H1 (cell line): ENCODE measurements at regions of chr6 and their contacts with region 1.

Region 1: GRCh38 chr6:37169496-37170272 is at the start of gene PIM1:
- DNase-seq: peak; percentile 92 to 93
- H3K4me3 ChIP-seq: peak within 1 kb of the TSS; percentile 92 to 99 (median 94)
- H3K27ac ChIP-seq: peak within 1 kb of the TSS; percentile 97
- H3K4me1 ChIP-seq: peaks cover 6 to 14% (median 10%) of the 10 kb centered on the region in 4 experiments; a peak in 5 of 7 replicates
- H3K27me3 ChIP-seq: no peaks in the 10 kb centered on the region
- CTCF ChIP-seq: no peak
- EP300 ChIP-seq: peak in 1 of 2 experiments; percentile 54; a peak in 1 of 3 replicates
- POLR2A ChIP-seq: peak in 1 of 2 experiments; percentile 65
- RAD21 ChIP-seq: no peak
- total RNA-seq, gene PIM1: 94.1 and 94.9 TPM in 2 replicates

Region 2: GRCh38 chr6:37059344-37060206 is 110.1 kb before region 1 on chr6:
- CTCF ChIA-PET with region 1: interaction called, 40 read pairs
- POLR2A ChIA-PET with region 1: interaction called, 82 read pairs
- DNase-seq: peak in 1 of 2 experiments; percentile 82
- H3K4me3 ChIP-seq: peak overlapping the region in 3 of 4 experiments; percentile 20 to 46 (median 24); a peak in 4 of 8 replicates
- H3K27ac ChIP-seq: peak overlapping the region; percentile 94
- H3K4me1 ChIP-seq: peaks cover 4 to 31% (median 22%) of the 10 kb centered on the region in 4 experiments
- H3K27me3 ChIP-seq: no peaks in the 10 kb centered on the region
- CTCF ChIP-seq: peak in 2 of 3 experiments; percentile 73 to 82; a peak in 3 of 4 replicates
- EP300 ChIP-seq: peak in 1 of 2 experiments; percentile 19; a peak in 1 of 3 replicates
- POLR2A ChIP-seq: peak in 1 of 2 experiments; percentile 78; a peak in 2 of 3 replicates
- RAD21 ChIP-seq: peak; percentile 82 to 83

Region 3: DNA sequence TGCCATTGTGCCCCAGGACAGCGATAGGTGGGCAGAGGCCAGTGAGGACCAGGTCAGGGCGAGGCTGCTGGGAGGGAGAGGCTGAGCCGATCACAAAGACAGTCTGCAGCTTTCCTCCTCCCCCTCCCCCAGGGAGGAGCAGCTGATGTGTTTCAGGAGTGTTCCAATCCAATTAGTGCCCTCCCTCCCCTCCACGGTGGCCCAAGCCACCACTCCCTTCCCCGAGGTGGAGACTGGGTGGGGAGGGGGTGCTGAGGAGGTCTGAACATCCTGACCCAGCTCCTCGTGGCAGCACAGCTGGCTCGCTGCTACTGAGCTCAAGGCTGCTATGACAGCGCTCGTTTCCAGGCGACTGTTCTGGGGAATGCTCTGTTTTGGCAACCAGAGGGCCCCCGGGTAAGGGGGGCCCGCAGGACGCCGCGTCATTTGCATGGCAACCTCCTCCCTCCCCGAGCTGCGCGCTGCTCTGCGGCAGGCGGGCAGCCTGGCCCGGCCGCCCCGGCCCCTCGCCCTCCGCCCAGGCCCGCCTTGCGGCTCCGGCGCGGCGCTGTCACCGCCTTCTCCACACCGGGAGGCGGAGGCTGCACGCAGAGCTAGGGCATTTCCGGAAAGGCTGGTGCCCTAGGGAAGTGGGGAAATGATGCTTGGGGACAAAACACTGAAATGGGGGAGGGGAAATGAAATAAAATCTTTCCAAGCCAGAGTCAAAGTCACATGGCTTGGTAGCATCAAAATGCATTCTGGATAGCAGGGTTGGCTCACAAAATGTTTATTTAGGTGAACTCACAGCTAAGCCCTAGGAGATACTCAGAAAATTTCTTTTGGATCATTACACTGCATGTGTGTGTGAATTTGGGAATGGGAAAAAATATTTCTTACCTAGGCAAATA is 67.2 kb before region 1 on chr6:
- CTCF ChIA-PET with region 1: interaction called, 20 read pairs
- POLR2A ChIA-PET with region 1: interaction called, 1,024 read pairs
- DNase-seq: peak; percentile 73 to 87
- H3K4me3 ChIP-seq: peak overlapping the region; percentile 18 to 53 (median 47); a peak in 7 of 8 replicates
- H3K27ac ChIP-seq: peak overlapping the region; percentile 81
- H3K4me1 ChIP-seq: peaks cover 23 to 33% (median 28%) of the 10 kb centered on the region in 4 experiments
- H3K27me3 ChIP-seq: no peaks in the 10 kb centered on the region
- CTCF ChIP-seq: peak in 1 of 3 experiments; percentile 2; a peak in 1 of 4 replicates
- EP300 ChIP-seq: peak; percentile 46 to 91; a peak in 2 of 3 replicates
- POLR2A ChIP-seq: peak; percentile 22 to 50
- RAD21 ChIP-seq: peak in 1 of 2 experiments; percentile 14; a peak in 1 of 4 replicates

Region 4: GRCh38 chr6:37125783-37126492 is 43.7 kb before region 1 on chr6:
- CTCF ChIA-PET with region 1: interaction called, 39 read pairs
- POLR2A ChIA-PET with region 1: interaction called, 1,024 read pairs
- DNase-seq: peak; percentile 74 to 81
- H3K4me3 ChIP-seq: peak overlapping the region; percentile 12 to 58 (median 39); a peak in 7 of 8 replicates
- H3K27ac ChIP-seq: peak overlapping the region; percentile 94
- H3K4me1 ChIP-seq: peaks cover 19 to 42% (median 31%) of the 10 kb centered on the region in 4 experiments
- H3K27me3 ChIP-seq: no peaks in the 10 kb centered on the region
- CTCF ChIP-seq: no peak
- EP300 ChIP-seq: peak in 1 of 2 experiments; percentile 26; a peak in 1 of 3 replicates
- POLR2A ChIP-seq: peak in 1 of 2 experiments; percentile 53; a peak in 2 of 3 replicates
- RAD21 ChIP-seq: peak in 1 of 2 experiments; percentile 0; a peak in 1 of 4 replicates

Region 5: DNA sequence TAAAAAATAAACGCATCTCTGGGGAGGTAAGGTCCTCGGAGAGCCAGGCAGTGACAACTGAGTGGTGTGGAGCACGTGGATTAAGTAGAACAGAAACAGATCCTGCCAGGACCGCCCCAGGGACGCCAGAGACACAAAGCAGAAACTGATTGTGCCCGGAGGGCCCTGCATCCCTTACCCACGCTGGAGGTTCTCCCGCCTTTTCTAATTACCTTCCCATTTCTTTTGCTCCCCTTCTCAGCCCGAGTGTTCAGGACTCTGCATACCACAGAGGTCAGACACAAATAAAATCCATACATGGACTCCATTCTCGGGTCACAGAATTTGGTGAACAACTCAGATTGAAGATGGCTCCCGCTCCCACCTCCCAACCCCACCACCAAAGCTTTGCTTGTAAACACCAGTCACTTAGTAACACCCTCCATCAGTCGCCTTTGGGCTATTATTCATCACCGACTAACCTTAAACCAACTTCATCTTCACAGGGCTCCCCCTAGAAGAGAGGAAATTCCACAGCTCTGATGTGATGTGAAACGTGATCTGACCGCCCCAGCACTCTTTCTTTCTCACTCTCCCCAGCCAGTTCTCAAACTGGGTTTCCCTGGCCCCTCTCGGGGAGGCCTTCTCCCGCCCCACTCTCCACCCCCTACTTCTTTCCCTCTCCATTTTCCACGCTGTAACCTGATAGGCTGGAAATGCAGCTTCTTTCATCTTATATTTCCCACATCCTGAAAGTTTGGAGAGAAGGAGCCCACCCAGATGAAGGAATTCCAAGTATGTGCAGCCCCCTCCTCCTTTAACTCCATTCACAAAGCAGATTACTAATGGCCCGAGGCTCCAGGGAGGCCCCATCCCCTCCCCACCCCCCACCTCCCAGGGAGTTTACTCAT is 32.2 kb before region 1 on chr6:
- CTCF ChIA-PET with region 1: interaction called, 59 read pairs
- POLR2A ChIA-PET with region 1: interaction called, 1,024 read pairs
- DNase-seq: peak; percentile 77 to 93
- H3K4me3 ChIP-seq: peak overlapping the region; percentile 49 to 90 (median 87)
- H3K27ac ChIP-seq: peak overlapping the region; percentile 98
- H3K4me1 ChIP-seq: peaks cover 15 to 37% (median 28%) of the 10 kb centered on the region in 4 experiments
- H3K27me3 ChIP-seq: no peaks in the 10 kb centered on the region
- CTCF ChIP-seq: no peak
- EP300 ChIP-seq: peak; percentile 29 to 86; a peak in 2 of 3 replicates
- POLR2A ChIP-seq: peak in 1 of 2 experiments; percentile 95; a peak in 2 of 3 replicates
- RAD21 ChIP-seq: peak; percentile 18 to 28; a peak in 2 of 4 replicates

Region 6: GRCh38 chr6:37182736-37183590 is 13.3 kb after region 1 on chr6:
- CTCF ChIA-PET with region 1: interaction called, 5 read pairs
- POLR2A ChIA-PET with region 1: interaction called, 10 read pairs
- DNase-seq: no peak
- H3K4me3 ChIP-seq: no peak overlapping the region
- H3K27ac ChIP-seq: no peak overlapping the region
- H3K4me1 ChIP-seq: no peaks in the 10 kb centered on the region
- H3K27me3 ChIP-seq: no peaks in the 10 kb centered on the region
- CTCF ChIP-seq: no peak
- EP300 ChIP-seq: no peak
- POLR2A ChIP-seq: no peak
- RAD21 ChIP-seq: no peak

Region 7: GRCh38 chr6:37277001-37277409 is 107.3 kb after region 1 on chr6:
- CTCF ChIA-PET with region 1: no interaction called
- POLR2A ChIA-PET with region 1: no interaction called
- DNase-seq: no peak
- H3K4me3 ChIP-seq: no peak overlapping the region
- H3K27ac ChIP-seq: no peak overlapping the region
- H3K4me1 ChIP-seq: no peaks in the 10 kb centered on the region; a peak in 1 of 7 replicates
- H3K27me3 ChIP-seq: no peaks in the 10 kb centered on the region
- CTCF ChIP-seq: no peak
- EP300 ChIP-seq: no peak
- POLR2A ChIP-seq: no peak
- RAD21 ChIP-seq: no peak

Region 8: GRCh38 chr6:37538107-37538506 is 368.4 kb after region 1 on chr6:
- CTCF ChIA-PET with region 1: no interaction called
- POLR2A ChIA-PET with region 1: no interaction called
- DNase-seq: peak in 1 of 2 experiments; percentile 71
- H3K4me3 ChIP-seq: no peak overlapping the region
- H3K27ac ChIP-seq: no peak overlapping the region
- H3K4me1 ChIP-seq: peaks cover 0 to 16% (median 7%) of the 10 kb centered on the region in 4 experiments; a peak in 5 of 7 replicates
- H3K27me3 ChIP-seq: peaks cover 23 to 52% (median 42%) of the 10 kb centered on the region in 4 experiments
- CTCF ChIP-seq: peak; percentile 72 to 85 (median 80)
- EP300 ChIP-seq: no peak
- POLR2A ChIP-seq: no peak
- RAD21 ChIP-seq: peak; percentile 71 to 80